Mammary epithelial cell (primary cell): ENCODE measurements at regions of chr10 and their contacts with region 1.

Region 1: GRCh38 chr10:6202684-6203330 is at the start of gene PFKFB3:
- DNase-seq: peak; percentile 92
- H3K4me3 ChIP-seq: peak within 1 kb of the TSS; percentile 60 to 98 (median 94)
- H3K27ac ChIP-seq: peak within 1 kb of the TSS; percentile 90
- H3K4me1 ChIP-seq: peaks cover 28% of the 10 kb centered on the region
- H3K27me3 ChIP-seq: no peaks in the 10 kb centered on the region
- CTCF ChIP-seq: peak; percentile 69 to 92
- total RNA-seq, gene PFKFB3: 24.0 to 49.5 TPM

Region 2: DNA sequence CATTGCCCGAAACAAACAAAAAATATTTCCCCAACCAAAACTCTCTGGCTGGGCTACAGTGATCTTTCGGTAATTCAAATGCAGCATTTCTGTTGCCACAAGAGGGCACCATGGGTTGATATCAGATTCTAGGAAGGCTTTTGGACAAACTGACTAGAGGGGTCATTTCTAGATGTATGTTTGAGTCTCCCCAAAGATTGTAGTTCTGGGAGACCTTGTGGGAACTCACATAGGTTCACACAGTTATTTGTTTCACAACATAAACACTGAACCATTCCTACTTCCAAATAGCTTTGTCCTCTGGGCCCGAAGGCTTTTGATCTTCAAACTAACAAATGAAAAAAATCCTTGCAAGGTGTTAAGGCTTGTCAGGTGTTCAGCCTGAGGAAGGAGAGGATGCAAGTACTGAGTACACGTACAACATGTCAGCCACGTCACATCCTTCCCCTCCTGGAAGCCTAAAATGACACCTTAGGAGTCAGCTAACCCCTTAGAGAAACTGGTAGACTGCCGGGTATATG is 188.5 kb before region 1 on chr10:
- CTCF ChIA-PET with region 1: interaction called, 3 read pairs
- dilution Hi-C with region 1: no loop called
- in situ Hi-C with region 1: no loop called
- intact Hi-C with region 1: loop called (anchors 2 kb)
- DNase-seq: peak; percentile 32
- H3K4me3 ChIP-seq: no peak overlapping the region
- H3K27ac ChIP-seq: no peak overlapping the region
- H3K4me1 ChIP-seq: no peaks in the 10 kb centered on the region
- H3K27me3 ChIP-seq: no peaks in the 10 kb centered on the region
- CTCF ChIP-seq: peak; percentile 65 to 72

Region 3: GRCh38 chr10:6108603-6109443 is 94.0 kb before region 1 on chr10:
- CTCF ChIA-PET with region 1: interaction called, 5 read pairs
- dilution Hi-C with region 1: no loop called
- in situ Hi-C with region 1: no loop called
- intact Hi-C with region 1: loop called (anchors 1 kb)
- DNase-seq: peak; percentile 14
- H3K4me3 ChIP-seq: no peak overlapping the region
- H3K27ac ChIP-seq: no peak overlapping the region
- H3K4me1 ChIP-seq: peaks cover 6% of the 10 kb centered on the region
- H3K27me3 ChIP-seq: no peaks in the 10 kb centered on the region
- CTCF ChIP-seq: peak; percentile 38 to 53

Region 4: GRCh38 chr10:6239213-6239991 is 36.6 kb after region 1 on chr10:
- CTCF ChIA-PET with region 1: interaction called, 5 read pairs
- dilution Hi-C with region 1: no loop called
- in situ Hi-C with region 1: no loop called
- intact Hi-C with region 1: loop called (anchors 1 kb)
- DNase-seq: peak; percentile 98
- H3K4me3 ChIP-seq: no peak overlapping the region
- H3K27ac ChIP-seq: peak overlapping the region; percentile 24
- H3K4me1 ChIP-seq: peaks cover 20% of the 10 kb centered on the region
- H3K27me3 ChIP-seq: no peaks in the 10 kb centered on the region
- CTCF ChIP-seq: no peak

Region 5: GRCh38 chr10:6300106-6300783 is 97.4 kb after region 1 on chr10:
- CTCF ChIA-PET with region 1: no interaction called
- dilution Hi-C with region 1: no loop called
- in situ Hi-C with region 1: no loop called
- intact Hi-C with region 1: loop called (anchors 2 kb)
- DNase-seq: peak; percentile 40
- H3K4me3 ChIP-seq: no peak overlapping the region
- H3K27ac ChIP-seq: no peak overlapping the region
- H3K4me1 ChIP-seq: peaks cover 43% of the 10 kb centered on the region
- H3K27me3 ChIP-seq: no peaks in the 10 kb centered on the region
- CTCF ChIP-seq: no peak